ENCODE measurements at regions of chr11 and their contacts with region 1.

Region 1: DNA sequence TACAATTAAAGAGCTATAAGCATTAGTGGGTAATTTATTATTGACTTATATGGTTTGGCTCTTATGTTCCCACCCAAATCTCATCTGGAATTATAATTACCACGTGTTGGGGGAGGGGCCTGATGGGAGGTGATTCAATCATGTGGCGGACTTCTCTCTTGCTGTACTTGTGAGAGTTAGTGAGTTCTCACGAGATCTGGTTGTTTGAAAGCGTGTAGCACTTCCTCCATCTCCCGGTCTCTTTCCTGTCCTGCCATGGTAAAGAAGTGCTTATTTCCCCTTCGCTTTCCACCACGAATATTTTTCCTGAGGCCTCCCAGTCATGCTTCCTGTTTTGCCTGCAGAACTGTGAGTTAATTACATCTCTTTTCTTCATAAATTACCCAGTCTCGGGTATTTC is 28.1 kb upstream of the CHORDC1 start:
- DNase-seq: no peak
- H3K4me3 Mint-ChIP-seq: peak overlapping the region; percentile 76
- H3K27ac Mint-ChIP-seq: no peak overlapping the region
- H3K4me1 Mint-ChIP-seq: peaks cover 6% of the 10 kb centered on the region
- H3K27me3 Mint-ChIP-seq: peaks cover 5% of the 10 kb centered on the region

Region 2: GRCh38 chr11:90364527-90364926 is 113.6 kb after region 1 on chr11:
- intact Hi-C with region 1: no loop called
- DNase-seq: no peak
- H3K4me3 Mint-ChIP-seq: no peak overlapping the region
- H3K27ac Mint-ChIP-seq: no peak overlapping the region
- H3K4me1 Mint-ChIP-seq: no peaks in the 10 kb centered on the region
- H3K27me3 Mint-ChIP-seq: no peaks in the 10 kb centered on the region

Region 3: DNA sequence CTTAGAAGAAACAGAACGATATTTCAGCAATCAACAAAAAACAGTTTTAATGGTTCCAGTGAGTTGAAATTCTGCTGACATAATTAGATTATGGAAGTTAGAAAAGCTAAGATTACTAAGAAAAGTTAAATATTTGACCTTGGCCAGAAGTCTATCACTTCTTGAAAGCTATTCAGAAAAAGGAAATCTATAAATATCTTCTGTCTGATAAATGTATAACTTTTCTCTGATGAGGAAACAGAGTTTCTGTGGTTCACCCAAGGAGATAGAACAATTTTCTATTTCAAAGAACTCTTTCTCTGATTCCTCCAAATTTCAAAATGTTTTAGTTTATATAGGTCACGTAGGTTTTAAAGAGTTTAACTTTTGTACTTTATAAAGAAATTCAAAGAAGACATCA is 410.3 kb after region 1 on chr11:
- intact Hi-C with region 1: no loop called
- DNase-seq: no peak
- H3K4me3 Mint-ChIP-seq: no peak overlapping the region
- H3K27ac Mint-ChIP-seq: no peak overlapping the region
- H3K4me1 Mint-ChIP-seq: no peaks in the 10 kb centered on the region
- H3K27me3 Mint-ChIP-seq: no peaks in the 10 kb centered on the region

Region 4: GRCh38 chr11:91248199-91248807 is 997.3 kb after region 1 on chr11:
- intact Hi-C with region 1: loop called (anchors 2 kb)
- DNase-seq: peak; percentile 65
- H3K4me3 Mint-ChIP-seq: no peak overlapping the region
- H3K27ac Mint-ChIP-seq: no peak overlapping the region
- H3K4me1 Mint-ChIP-seq: no peaks in the 10 kb centered on the region
- H3K27me3 Mint-ChIP-seq: no peaks in the 10 kb centered on the region